ENCODE measurements at regions of chr19 and their contacts with region 1.

Region 1: DNA sequence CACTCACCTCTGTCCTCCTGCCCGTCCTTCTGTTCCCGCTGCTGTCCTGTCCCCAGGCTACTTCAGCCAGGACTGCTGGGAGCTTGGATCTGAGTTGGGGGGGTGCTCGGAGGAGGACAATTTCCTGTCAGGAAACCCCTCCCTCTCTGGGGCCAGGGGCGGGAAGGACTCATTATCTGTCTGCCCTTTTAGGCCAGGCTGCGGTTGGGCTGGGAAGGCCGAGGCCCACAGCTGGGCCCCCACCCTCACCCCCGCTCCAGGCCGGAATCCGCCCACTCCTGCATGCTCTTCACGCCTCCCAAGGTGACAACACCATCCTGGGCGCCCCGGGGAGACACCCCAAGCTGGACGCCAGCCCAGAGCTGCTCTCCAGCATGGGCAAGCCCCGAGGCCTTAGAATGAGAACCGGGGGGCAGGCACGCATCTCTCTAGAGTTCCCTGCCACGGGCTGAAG is at the start of gene EXOC3L2:
- DNase-seq: peak; percentile 74 to 81 (median 80)
- ATAC-seq: peak; percentile 72 to 88
- H3K4me3 ChIP-seq: peak within 1 kb of the TSS; percentile 37
- H3K27ac ChIP-seq: peak within 1 kb of the TSS; percentile 28
- H3K4me1 ChIP-seq: no peaks in the 10 kb centered on the region
- H3K27me3 ChIP-seq: no peaks in the 10 kb centered on the region
- total RNA-seq, gene EXOC3L2: 3.4 to 5.6 (median 4.5) TPM

Region 2: DNA sequence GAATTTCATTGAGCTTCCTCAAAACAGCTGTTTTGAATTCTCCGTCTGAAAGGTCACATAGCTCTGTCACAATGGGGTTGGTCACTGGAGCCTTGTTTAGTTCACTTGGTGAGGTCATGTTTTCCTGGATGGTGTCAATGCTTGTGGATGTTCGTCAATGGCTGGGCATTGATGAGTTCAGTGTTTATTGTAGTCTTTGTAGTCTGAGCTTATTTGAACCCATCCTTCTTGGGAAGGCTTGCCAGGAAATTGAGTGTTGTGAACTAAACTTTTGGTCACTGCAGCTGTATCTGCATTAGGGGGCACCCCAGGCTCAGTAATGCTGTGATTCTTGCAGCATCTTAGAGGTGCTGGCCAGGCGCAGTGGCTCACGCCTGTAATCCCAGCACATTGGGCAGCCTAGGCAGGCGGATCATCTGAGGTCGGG is 44.8 kb before region 1 on chr19:
- intact Hi-C with region 1: loop called in 2 of 4 experiments (anchors 10 kb)
- DNase-seq: peak; percentile 47 to 66 (median 53)
- ATAC-seq: peak; percentile 79 to 87
- H3K4me3 ChIP-seq: no peak overlapping the region
- H3K27ac ChIP-seq: no peak overlapping the region
- H3K4me1 ChIP-seq: no peaks in the 10 kb centered on the region
- H3K27me3 ChIP-seq: no peaks in the 10 kb centered on the region